Mucosa of descending colon (tissue), 3 donors: ENCODE measurements at regions of chr7 and their contacts with region 1.

Region 1: GRCh38 chr7:140175221-140176121 is 1.3 kb downstream of the KDM7A start:
- DNase-seq: peak; percentile 91 to 94 (median 93)
- ATAC-seq: peak; percentile 77
- H3K4me3 ChIP-seq: peak overlapping the region; percentile 80
- H3K4me1 ChIP-seq: peaks cover 27% of the 10 kb centered on the region
- CTCF ChIP-seq: peak; percentile 47

Region 2: DNA sequence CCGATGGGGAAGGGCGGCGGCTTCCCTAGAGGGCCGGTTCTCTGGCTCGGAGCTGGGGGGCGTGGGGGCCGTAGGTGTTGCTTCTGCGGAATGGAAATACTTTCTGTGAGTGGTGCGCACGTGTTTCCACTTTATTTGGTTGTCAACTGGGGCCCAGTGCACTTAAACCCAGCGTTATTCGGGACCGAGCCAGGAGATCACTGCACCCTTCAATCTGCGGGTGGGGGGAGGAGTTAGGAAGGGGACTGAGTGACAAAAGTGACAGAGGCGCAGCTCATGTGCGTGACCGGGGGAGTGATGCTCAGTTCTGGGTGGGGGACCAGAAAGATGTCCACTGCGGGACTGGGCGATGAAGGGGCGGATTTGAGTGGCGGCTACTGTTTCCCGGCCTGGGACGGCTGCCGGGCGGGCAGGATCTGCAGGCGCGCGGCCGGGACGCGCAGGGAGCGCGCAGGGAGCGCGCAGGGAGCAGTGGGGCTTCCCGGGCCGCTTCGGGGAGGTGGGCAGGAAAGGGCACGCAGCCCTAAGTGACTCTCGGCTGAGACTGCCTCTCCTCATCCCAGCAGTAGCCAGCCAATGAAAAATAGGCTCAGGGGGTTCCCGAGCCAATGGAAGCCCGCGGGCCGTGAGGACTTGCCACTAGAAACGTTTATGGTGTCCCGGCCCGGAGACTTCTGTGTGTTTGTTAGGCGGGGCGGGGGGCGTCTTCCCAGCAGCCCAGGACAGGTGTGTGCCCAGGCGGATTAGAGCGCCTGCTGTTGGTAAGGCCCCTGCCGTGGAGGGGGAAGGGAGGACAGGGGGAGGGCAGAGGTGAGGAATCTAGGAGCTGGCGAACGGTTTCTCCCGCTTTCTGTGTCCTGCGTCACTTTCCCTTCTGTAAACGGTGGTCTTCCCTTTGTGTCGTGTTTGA is 55.6 kb after region 1 on chr7:
- intact Hi-C with region 1: loop called in 1 of 2 experiments (anchors 10 kb)
- DNase-seq: peak; percentile 89 to 93 (median 91)
- ATAC-seq: peak; percentile 59
- H3K4me3 ChIP-seq: peak overlapping the region; percentile 9
- H3K4me1 ChIP-seq: peaks cover 32% of the 10 kb centered on the region
- CTCF ChIP-seq: no peak

Region 3: DNA sequence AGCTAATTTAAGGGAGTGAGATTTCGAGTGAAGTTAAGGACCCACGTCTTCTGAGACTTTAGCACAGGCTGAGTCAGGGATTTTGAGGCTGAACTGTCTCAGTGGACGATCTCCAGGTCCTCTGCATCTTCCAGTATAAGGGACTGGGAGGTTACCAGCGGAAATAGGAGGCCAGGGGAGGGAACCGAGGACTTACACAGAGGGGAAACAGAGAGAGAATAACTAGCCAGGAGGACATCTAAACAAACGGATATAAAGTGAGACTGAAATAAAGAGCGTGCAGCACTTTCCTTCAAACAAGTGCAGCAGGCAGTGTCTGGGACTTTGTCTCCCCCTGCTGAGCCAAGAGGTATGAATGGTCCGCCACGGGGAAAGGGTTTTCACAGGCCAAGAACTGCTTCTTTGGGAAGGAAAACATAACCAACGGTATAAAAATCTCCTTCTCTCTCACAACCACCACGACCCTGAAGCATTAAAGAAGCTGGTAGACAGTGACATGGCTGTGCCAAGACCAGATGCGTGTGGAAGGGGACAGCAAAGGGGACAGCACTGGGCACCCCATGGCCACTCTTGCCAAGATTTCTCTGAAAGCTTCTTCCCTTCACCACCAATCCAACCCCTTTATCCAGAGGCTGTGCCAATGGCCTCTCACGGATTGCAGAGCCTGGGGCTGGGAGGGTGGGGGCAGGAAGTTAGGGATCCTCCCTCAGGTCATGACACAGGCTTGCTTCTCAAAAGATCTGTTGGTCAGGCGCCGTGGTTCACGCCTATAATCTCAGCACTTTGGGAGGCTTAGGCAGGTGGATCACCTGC is 150.9 kb after region 1 on chr7:
- intact Hi-C with region 1: loop called in 1 of 2 experiments (anchors 2 kb)
- DNase-seq: peak in 2 of 3 donors; percentile 76 to 90
- ATAC-seq: peak; percentile 89
- H3K4me3 ChIP-seq: no peak overlapping the region
- H3K4me1 ChIP-seq: peaks cover 28% of the 10 kb centered on the region
- CTCF ChIP-seq: peak; percentile 42